Common myeloid progenitor, CD34-positive (primary cell): ENCODE measurements at regions of chr17 and their contacts with region 1.

Region 1: GRCh38 chr17:82592767-82593589 is 55.3 kb downstream of the WDR45B start:
- DNase-seq: peak; percentile 91 to 97 (median 95)
- H3K4me3 ChIP-seq: peak overlapping the region in 5 of 7 experiments; percentile 52 to 71 (median 58)
- H3K27ac ChIP-seq: peak overlapping the region; percentile 64 to 80
- H3K4me1 ChIP-seq: peaks cover 16 to 57% (median 51%) of the 10 kb centered on the region in 4 experiments
- H3K27me3 ChIP-seq: no peaks in the 10 kb centered on the region

Region 2: DNA sequence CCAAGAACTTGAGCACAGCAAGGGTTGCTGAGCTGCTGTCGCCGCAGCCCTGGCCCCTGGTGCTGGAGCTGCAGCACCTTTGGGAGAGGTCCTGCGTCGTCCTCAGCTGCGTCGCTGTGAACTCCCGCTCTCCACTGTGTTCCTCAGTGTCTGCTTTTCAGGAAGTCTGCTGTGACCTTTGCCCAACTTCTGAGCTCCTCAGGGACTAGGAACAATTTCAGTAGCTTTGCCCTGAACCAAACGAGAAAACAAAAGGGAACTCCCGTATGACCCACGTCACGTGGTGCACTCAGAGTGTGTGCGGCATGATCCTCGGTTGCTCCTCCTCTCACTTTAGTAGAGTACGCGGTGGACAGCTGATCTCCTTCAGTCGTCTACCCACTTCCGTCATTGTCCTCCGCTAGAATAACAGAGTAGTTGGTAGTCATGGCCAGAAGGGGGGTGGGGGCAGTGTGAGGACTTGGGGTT is 11.0 kb after region 1 on chr17:
- CTCF ChIA-PET with region 1: interaction called, 12 read pairs
- POLR2A ChIA-PET with region 1: interaction called, 7 read pairs
- DNase-seq: peak; percentile 86 to 98 (median 94)
- H3K4me3 ChIP-seq: no peak overlapping the region
- H3K27ac ChIP-seq: peak overlapping the region; percentile 22 to 64
- H3K4me1 ChIP-seq: peaks cover 2 to 22% (median 12%) of the 10 kb centered on the region in 4 experiments
- H3K27me3 ChIP-seq: no peaks in the 10 kb centered on the region